B cell (primary cell): ENCODE measurements at regions of chr3 and their contacts with region 1.

Region 1: DNA sequence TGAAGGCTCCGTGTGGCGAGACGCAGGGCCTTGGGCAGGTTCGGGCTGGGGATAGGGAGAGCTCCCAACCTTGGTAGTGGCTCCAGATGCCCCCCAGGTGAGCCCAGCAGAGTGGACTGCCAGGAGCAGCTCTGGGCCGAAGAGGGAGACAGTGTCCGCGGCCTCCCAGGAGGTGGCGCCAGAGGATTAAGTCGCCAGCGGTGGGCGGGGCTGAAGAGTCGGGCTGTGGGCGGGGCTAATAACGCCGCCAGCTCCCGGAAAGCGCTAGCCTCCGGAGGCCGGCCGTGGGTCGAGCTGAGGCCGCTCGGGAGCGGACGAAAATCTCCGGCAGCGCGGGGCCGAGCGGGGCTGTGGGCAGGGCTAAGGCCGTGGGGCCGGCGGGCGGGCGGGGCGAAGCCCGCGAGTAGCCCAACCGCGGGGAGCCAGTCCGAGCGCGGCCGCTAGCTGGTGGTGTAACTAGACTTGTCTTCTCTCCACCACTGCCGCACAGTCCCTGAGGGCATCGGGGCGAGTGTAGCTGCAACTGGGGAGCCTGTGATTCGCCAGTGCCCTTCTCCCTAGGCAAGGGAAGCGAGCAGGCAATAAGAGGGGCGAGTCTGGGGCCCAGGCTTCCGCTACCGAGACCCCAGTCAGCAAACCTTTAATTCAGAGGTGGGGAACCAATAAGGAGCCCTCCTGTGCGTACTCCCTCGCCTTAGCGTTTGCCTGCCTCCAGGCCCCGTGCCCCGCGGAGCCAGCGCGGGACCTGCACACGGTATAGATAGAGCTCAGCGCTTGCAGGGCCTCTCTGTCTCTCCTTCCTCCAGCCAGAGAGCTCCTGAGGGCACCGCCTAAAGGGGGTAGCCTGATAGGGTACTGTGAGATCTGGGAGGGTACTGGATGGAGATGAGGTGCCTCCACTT is 14.4 kb upstream of the BSN start:
- DNase-seq: peak; percentile 93
- ATAC-seq: peak; percentile 94
- H3K4me3 ChIP-seq: peak overlapping the region; percentile 19 to 82 (median 63)
- H3K4me3 Mint-ChIP-seq: peak overlapping the region; percentile 84
- H3K27ac ChIP-seq: peak overlapping the region; percentile 16 to 63
- H3K27ac Mint-ChIP-seq: peak overlapping the region; percentile 68
- H3K4me1 ChIP-seq: peaks cover 0 to 6% of the 10 kb centered on the region in 2 donors
- H3K4me1 Mint-ChIP-seq: peaks cover 7% of the 10 kb centered on the region
- H3K27me3 ChIP-seq: peaks cover 0 to 4% (median 0%) of the 10 kb centered on the region in 4 experiments
- H3K27me3 Mint-ChIP-seq: peaks cover 19% of the 10 kb centered on the region
- CTCF ChIP-seq: peak; percentile 92

Region 2: DNA sequence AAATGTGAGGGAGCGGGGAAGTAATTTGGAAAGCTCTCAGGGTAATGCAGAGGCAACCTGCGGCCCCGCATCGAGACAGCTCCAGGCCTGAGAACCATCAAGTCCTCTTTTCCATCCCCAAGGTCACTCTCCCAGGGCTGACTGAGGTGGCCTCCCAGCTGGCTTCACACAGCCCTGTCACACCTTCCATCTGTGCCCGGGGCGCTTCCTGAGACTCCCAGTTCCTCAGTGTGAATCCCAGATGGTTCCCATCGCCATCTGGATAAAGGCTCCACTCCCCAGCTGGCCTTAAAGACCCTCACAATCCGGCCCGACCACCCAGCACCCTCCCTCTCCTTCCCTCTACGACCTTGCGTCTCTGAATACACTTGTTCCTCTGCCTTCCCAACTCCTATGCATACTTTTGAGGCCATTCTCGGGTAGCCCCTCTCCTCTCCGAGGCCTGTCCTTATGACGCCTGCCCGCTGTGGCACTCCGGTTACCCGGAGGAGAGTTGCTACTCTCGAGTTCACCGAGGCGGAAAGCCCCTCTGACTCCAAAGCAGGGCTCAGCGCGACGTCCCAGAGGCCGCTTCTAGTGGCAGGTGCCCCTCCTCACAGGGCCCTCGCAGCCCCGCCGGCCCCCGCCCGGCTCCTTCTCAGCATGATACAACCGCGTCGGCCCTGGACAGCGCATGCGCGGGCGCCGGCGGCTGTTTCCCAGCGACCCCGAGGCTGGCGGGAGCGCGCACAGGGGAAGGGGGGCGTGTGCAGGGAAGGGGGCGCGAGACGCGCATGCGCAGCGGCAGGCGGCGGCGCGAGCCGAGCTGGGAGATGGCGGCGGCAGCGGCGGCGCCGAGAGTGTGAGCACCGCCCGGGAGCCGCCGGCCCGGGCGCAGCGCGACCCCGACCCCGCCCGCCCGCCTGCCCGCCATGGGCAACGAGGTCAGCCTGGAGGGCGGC is 14.1 kb after region 1 on chr3 and contains the start of gene BSN:
- CTCF ChIA-PET with region 1: interaction called, 28 read pairs
- POLR2A ChIA-PET with region 1: interaction called, 5 read pairs
- intact Hi-C with region 1: loop called (anchors 1 kb)
- DNase-seq: peak; percentile 89
- ATAC-seq: peak; percentile 83
- H3K4me3 ChIP-seq: peak within 1 kb of the TSS in 4 of 5 experiments; percentile 32 to 75 (median 58)
- H3K4me3 Mint-ChIP-seq: peak within 1 kb of the TSS; percentile 85
- H3K27ac ChIP-seq: no peak within 1 kb of the TSS
- H3K27ac Mint-ChIP-seq: peak within 1 kb of the TSS; percentile 53
- H3K4me1 ChIP-seq: peaks cover 15% of the 10 kb centered on the region in 2 donors
- H3K4me1 Mint-ChIP-seq: peaks cover 10% of the 10 kb centered on the region
- H3K27me3 ChIP-seq: peaks cover 0 to 61% (median 24%) of the 10 kb centered on the region in 4 experiments
- H3K27me3 Mint-ChIP-seq: peaks cover 54% of the 10 kb centered on the region
- CTCF ChIP-seq: no peak
- total RNA-seq, gene BSN: 0.20 and 0.24 TPM in 2 replicates

Region 3: GRCh38 chr3:49703443-49703927 is 163.6 kb after region 1 on chr3:
- CTCF ChIA-PET with region 1: interaction called, 10 read pairs
- POLR2A ChIA-PET with region 1: no interaction called
- intact Hi-C with region 1: no loop called
- DNase-seq: peak; percentile 81
- ATAC-seq: peak; percentile 99
- H3K4me3 ChIP-seq: no peak overlapping the region
- H3K4me3 Mint-ChIP-seq: no peak overlapping the region
- H3K27ac ChIP-seq: no peak overlapping the region
- H3K27ac Mint-ChIP-seq: peak overlapping the region; percentile 59
- H3K4me1 ChIP-seq: no peaks in the 10 kb centered on the region
- H3K4me1 Mint-ChIP-seq: peaks cover 6% of the 10 kb centered on the region
- H3K27me3 ChIP-seq: no peaks in the 10 kb centered on the region
- H3K27me3 Mint-ChIP-seq: no peaks in the 10 kb centered on the region
- CTCF ChIP-seq: peak; percentile 87